IMR-90 (cell line): ENCODE measurements at regions of chr2 and their contacts with region 1.

Region 1: GRCh38 chr2:111647359-111647758 is 236.6 kb downstream of the ANAPC1 start:
- DNase-seq: no peak
- ATAC-seq: no peak
- H3K4me3 ChIP-seq: no peak overlapping the region
- H3K27ac ChIP-seq: no peak overlapping the region
- H3K4me1 ChIP-seq: no peaks in the 10 kb centered on the region
- H3K27me3 ChIP-seq: peaks cover 9% of the 10 kb centered on the region
- CTCF ChIP-seq: no peak
- POLR2A ChIP-seq: no peak
- RAD21 ChIP-seq: no peak

Region 2: DNA sequence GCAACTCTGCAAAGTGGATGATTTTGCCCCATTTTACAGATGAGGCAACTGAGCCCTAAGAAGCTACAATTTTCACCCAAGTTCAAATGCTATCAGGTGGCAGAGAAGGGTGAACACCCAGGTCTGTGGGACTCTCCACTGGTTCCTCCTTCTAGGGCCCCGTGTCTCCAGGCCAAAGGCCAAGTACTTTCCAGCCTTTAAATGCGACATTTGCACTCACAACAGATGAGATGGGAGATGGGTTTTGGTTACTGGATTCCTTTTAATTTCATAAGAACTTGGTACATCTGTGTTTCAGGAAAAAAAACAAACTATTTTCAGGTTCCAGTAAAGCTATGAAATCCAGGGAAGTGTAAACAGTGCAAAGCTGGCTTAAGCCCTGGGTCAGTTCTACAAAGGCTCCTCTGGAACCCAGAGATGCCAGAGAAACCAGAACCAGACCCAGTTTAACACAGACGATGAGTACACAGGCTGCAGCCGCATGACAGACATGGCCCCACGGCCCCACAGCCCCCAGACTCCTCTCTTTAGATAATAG is 125.1 kb before region 1 on chr2:
- CTCF ChIA-PET with region 1: no interaction called
- POLR2A ChIA-PET with region 1: no interaction called
- dilution Hi-C with region 1: no loop called
- in situ Hi-C with region 1: no loop called
- intact Hi-C with region 1: no loop called
- DNase-seq: peak; percentile 81
- ATAC-seq: peak; percentile 83
- H3K4me3 ChIP-seq: no peak overlapping the region
- H3K27ac ChIP-seq: peak overlapping the region; percentile 74; the same call in 1 of the 2 replicates
- H3K4me1 ChIP-seq: peaks cover 24% of the 10 kb centered on the region
- H3K27me3 ChIP-seq: no peaks in the 10 kb centered on the region; the same call in 1 of the 2 replicates
- CTCF ChIP-seq: no peak
- POLR2A ChIP-seq: no peak
- RAD21 ChIP-seq: no peak

Region 3: GRCh38 chr2:111632661-111633060 is 14.7 kb before region 1 on chr2:
- CTCF ChIA-PET with region 1: no interaction called
- POLR2A ChIA-PET with region 1: no interaction called
- dilution Hi-C with region 1: no loop called
- in situ Hi-C with region 1: no loop called
- intact Hi-C with region 1: loop called (anchors 2 kb)
- DNase-seq: peak; percentile 71
- ATAC-seq: no peak
- H3K4me3 ChIP-seq: no peak overlapping the region
- H3K27ac ChIP-seq: no peak overlapping the region
- H3K4me1 ChIP-seq: no peaks in the 10 kb centered on the region; the same call in 1 of the 2 replicates
- H3K27me3 ChIP-seq: peaks cover 1% of the 10 kb centered on the region; the same call in 1 of the 2 replicates
- CTCF ChIP-seq: no peak
- POLR2A ChIP-seq: no peak
- RAD21 ChIP-seq: no peak

Region 4: DNA sequence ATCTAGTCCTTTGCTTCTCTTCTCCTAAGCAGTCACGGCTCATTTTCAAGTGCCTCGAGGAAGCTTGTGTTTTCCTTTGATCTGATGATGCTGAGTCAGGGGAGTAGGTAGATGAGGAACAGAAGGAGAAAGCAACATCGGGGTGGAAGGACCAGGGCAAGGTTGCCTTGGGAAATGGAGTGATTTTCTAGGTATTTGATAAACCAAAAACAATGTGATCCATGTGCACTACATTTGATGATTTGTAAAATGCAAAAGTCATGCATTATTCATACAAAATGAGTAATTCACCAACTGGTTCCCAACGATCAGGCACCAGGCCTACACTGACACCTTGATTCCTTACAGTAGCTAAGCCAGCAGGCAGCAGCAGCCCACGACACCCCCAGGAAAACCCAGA is 31.3 kb after region 1 on chr2:
- CTCF ChIA-PET with region 1: no interaction called
- POLR2A ChIA-PET with region 1: no interaction called
- dilution Hi-C with region 1: no loop called
- in situ Hi-C with region 1: no loop called
- intact Hi-C with region 1: no loop called
- DNase-seq: peak; percentile 38
- ATAC-seq: no peak
- H3K4me3 ChIP-seq: no peak overlapping the region
- H3K27ac ChIP-seq: no peak overlapping the region
- H3K4me1 ChIP-seq: peaks cover 4% of the 10 kb centered on the region; the same call in 1 of the 2 replicates
- H3K27me3 ChIP-seq: peaks cover 13% of the 10 kb centered on the region
- CTCF ChIP-seq: no peak
- POLR2A ChIP-seq: no peak
- RAD21 ChIP-seq: no peak